Activated naive CD4-positive, alpha-beta T cell treated with anti-CD3 and anti-CD28 coated beads for 36 hours (primary cell): ENCODE measurements at regions of chr1 and their contacts with region 1.

Region 1: GRCh38 chr1:162497723-162498500 is at the start of gene UHMK1:
- DNase-seq: peak; percentile 96
- H3K4me3 Mint-ChIP-seq: peak within 1 kb of the TSS; percentile 84
- H3K27ac Mint-ChIP-seq: peak within 1 kb of the TSS; percentile 89
- H3K4me1 Mint-ChIP-seq: peaks cover 38% of the 10 kb centered on the region
- H3K27me3 Mint-ChIP-seq: no peaks in the 10 kb centered on the region
- total RNA-seq, gene UHMK1: 43.4 to 43.7 TPM

Region 2: GRCh38 chr1:162069328-162070093 is 428.4 kb before region 1 on chr1 and contains the start of gene NOS1AP:
- CTCF ChIA-PET with region 1: no interaction called
- intact Hi-C with region 1: loop called (anchors 1 kb)
- DNase-seq: peak; percentile 84
- H3K4me3 Mint-ChIP-seq: peak within 1 kb of the TSS; percentile 78
- H3K27ac Mint-ChIP-seq: no peak within 1 kb of the TSS
- H3K4me1 Mint-ChIP-seq: peaks cover 1% of the 10 kb centered on the region
- H3K27me3 Mint-ChIP-seq: peaks cover 50% of the 10 kb centered on the region
- total RNA-seq, gene NOS1AP: 0.33 to 0.42 TPM

Region 3: GRCh38 chr1:162193815-162194214 is 304.1 kb before region 1 on chr1:
- CTCF ChIA-PET with region 1: no interaction called
- intact Hi-C with region 1: no loop called
- DNase-seq: no peak
- H3K4me3 Mint-ChIP-seq: no peak overlapping the region
- H3K27ac Mint-ChIP-seq: no peak overlapping the region
- H3K4me1 Mint-ChIP-seq: no peaks in the 10 kb centered on the region
- H3K27me3 Mint-ChIP-seq: peaks cover 3% of the 10 kb centered on the region

Region 4: DNA sequence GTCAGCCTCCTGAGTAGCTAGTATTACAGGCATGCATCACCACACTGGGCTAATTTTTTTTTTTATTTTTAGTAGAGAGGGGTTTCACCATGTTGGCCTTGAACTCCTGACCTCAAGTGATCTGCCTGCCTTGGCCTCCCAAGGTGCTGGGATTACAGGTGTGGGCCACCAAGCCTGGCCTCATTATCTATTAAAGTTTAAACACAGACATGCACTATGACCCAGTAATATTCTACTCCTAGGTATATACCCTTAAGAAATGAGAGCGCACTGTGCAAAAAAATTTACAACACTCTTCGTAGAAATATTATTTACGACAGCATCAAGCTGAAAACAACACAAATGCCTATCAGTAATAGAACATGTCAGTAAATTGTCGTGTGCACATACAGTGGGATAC is 67.3 kb before region 1 on chr1:
- CTCF ChIA-PET with region 1: no interaction called
- intact Hi-C with region 1: no loop called
- DNase-seq: no peak
- H3K4me3 Mint-ChIP-seq: no peak overlapping the region
- H3K27ac Mint-ChIP-seq: no peak overlapping the region
- H3K4me1 Mint-ChIP-seq: no peaks in the 10 kb centered on the region
- H3K27me3 Mint-ChIP-seq: no peaks in the 10 kb centered on the region

Region 5: DNA sequence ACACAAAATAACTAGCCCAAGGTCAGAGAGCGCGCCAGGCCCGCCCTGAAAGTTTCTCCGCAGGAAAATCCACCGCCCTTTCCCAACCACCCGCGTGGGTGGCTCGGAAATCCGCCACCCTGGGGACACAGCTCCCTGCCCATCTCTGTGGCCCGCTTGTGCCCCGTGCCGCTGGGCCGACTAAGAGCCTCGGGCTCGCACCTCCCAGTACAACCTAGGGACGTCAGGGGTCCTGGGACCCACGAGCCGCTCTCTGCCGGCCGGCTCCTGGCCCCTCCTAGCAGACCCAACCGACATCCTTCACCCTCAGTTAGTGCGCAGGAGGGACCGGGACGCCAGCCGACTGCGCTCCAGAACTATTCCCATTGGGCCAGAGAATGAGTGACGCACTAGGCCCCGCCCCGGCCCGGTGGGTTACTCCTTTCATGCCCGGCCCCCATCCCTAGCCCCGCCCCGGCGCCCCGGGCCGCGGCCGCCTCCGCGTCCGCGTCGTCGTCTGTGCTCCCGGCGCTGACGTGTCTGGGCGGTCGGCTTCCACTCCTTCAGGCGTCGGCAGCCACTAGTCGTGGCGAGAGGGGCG is 63.2 kb after region 1 on chr1:
- CTCF ChIA-PET with region 1: no interaction called
- intact Hi-C with region 1: loop called (anchors 1 kb)
- DNase-seq: peak; percentile 98
- H3K4me3 Mint-ChIP-seq: peak overlapping the region; percentile 92
- H3K27ac Mint-ChIP-seq: peak overlapping the region; percentile 91
- H3K4me1 Mint-ChIP-seq: peaks cover 35% of the 10 kb centered on the region
- H3K27me3 Mint-ChIP-seq: no peaks in the 10 kb centered on the region

Region 6: GRCh38 chr1:162627662-162628296 is 129.9 kb after region 1 on chr1:
- CTCF ChIA-PET with region 1: no interaction called
- intact Hi-C with region 1: loop called (anchors 5 kb)
- DNase-seq: no peak
- H3K4me3 Mint-ChIP-seq: no peak overlapping the region
- H3K27ac Mint-ChIP-seq: no peak overlapping the region
- H3K4me1 Mint-ChIP-seq: no peaks in the 10 kb centered on the region
- H3K27me3 Mint-ChIP-seq: peaks cover 3% of the 10 kb centered on the region